ENCODE measurements at regions of chr4 and their contacts with region 1.

Region 1: DNA sequence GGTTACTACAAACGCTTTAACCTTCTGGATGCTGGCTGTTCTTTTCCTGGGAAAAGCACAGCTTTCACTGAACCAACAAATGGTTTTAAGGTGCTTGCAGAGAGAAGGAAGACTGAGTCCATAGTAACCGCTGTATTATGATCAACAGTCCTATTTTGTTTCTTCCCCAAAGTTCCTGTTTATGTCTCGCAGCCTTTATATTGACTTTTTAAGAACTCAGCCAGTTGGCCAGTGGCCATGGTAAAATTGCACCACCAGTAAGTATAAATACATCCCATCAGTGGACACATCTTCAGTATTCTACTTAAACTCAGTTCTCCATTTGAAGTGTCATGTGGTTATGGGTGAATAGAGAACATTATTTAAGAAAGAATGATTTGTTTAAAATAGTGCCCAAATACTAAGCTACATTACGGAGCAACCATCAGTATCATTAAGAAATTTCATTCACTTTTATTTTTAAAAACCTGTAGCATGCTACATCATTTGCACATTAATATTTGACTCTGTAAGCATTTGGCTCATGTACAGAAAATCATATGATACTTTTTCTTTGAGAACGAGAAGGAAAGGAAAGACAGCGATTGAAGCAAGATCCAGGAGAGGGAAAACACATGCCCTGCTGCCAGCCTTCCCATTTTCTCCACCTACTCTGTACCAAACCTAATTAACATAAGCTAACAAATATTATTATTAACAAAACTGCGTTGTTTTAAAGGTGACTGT is 287.0 kb downstream of the ARHGAP24 start:
- DNase-seq: peak; percentile 99
- H3K4me3 ChIP-seq: peak overlapping the region in 2 of 3 experiments; percentile 21 to 60
- H3K27ac ChIP-seq: peak overlapping the region; percentile 90
- H3K4me1 ChIP-seq: peaks cover 53% of the 10 kb centered on the region
- H3K27me3 ChIP-seq: no peaks in the 10 kb centered on the region
- CTCF ChIP-seq: no peak
- POLR2A ChIP-seq: no peak

Region 2: GRCh38 chr4:85734424-85734831 is 27.5 kb before region 1 on chr4:
- CTCF ChIA-PET with region 1: no interaction called
- POLR2A ChIA-PET with region 1: no interaction called
- dilution Hi-C with region 1: no loop called
- intact Hi-C with region 1: no loop called
- DNase-seq: peak; percentile 78
- H3K4me3 ChIP-seq: no peak overlapping the region
- H3K27ac ChIP-seq: no peak overlapping the region
- H3K4me1 ChIP-seq: peaks cover 7% of the 10 kb centered on the region
- H3K27me3 ChIP-seq: no peaks in the 10 kb centered on the region
- CTCF ChIP-seq: no peak
- POLR2A ChIP-seq: no peak

Region 3: GRCh38 chr4:85792376-85793232 is 30.6 kb after region 1 on chr4:
- CTCF ChIA-PET with region 1: interaction called, 59 read pairs
- POLR2A ChIA-PET with region 1: no interaction called
- dilution Hi-C with region 1: no loop called
- intact Hi-C with region 1: loop called (anchors 1 kb)
- DNase-seq: peak; percentile 88
- H3K4me3 ChIP-seq: peak overlapping the region in 1 of 3 experiments; percentile 5
- H3K27ac ChIP-seq: peak overlapping the region; percentile 62
- H3K4me1 ChIP-seq: peaks cover 81% of the 10 kb centered on the region
- H3K27me3 ChIP-seq: no peaks in the 10 kb centered on the region
- CTCF ChIP-seq: no peak
- POLR2A ChIP-seq: no peak

Region 4: GRCh38 chr4:86032476-86033022 is 270.6 kb after region 1 on chr4:
- CTCF ChIA-PET with region 1: interaction called, 3 read pairs
- POLR2A ChIA-PET with region 1: no interaction called
- dilution Hi-C with region 1: no loop called
- intact Hi-C with region 1: loop called (anchors 1 kb)
- DNase-seq: no peak
- H3K4me3 ChIP-seq: no peak overlapping the region
- H3K27ac ChIP-seq: peak overlapping the region; percentile 50
- H3K4me1 ChIP-seq: peaks cover 40% of the 10 kb centered on the region
- H3K27me3 ChIP-seq: no peaks in the 10 kb centered on the region
- CTCF ChIP-seq: no peak
- POLR2A ChIP-seq: no peak

Region 5: GRCh38 chr4:86286726-86287125 is 524.8 kb after region 1 on chr4:
- CTCF ChIA-PET with region 1: no interaction called
- POLR2A ChIA-PET with region 1: no interaction called
- dilution Hi-C with region 1: no loop called
- intact Hi-C with region 1: no loop called
- DNase-seq: no peak
- H3K4me3 ChIP-seq: no peak overlapping the region
- H3K27ac ChIP-seq: no peak overlapping the region
- H3K4me1 ChIP-seq: peaks cover 2% of the 10 kb centered on the region
- H3K27me3 ChIP-seq: no peaks in the 10 kb centered on the region
- CTCF ChIP-seq: no peak
- POLR2A ChIP-seq: no peak

Measured in endothelial cell of umbilical vein (primary cell).